MCF 10A (cell line): ENCODE measurements at regions of chr4 and their contacts with region 1.

Region 1: DNA sequence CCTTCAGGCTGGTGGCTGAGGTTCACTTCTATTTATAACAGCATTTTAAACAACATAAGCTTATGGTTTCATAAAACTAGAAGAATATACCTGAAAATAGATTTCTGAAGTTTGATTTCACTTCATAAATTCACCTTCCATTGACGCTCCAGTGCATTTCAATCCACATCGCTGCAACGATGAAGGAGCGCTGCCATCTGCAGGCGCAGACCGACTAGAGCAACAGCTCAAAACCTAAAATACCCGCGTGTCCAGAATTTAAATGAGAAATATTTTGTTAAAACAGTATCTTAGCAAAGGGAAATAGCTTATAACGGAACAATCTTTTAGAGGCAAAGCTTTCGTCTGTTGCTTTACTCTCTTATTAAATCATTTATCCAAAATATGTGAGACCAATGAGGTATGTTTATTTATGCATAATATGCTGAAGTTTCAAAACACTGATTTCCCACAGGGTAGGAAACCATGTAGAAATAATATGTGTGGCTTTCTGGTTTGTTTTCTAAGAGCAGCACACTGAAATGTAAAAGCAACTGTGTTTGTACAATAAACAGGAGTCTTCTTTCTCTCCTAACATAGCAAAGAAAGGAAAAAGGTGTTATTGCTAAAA is 816.4 kb upstream of the FRG1 start:
- DNase-seq: peak; percentile 47
- H3K4me3 Mint-ChIP-seq: no peak overlapping the region
- H3K27ac Mint-ChIP-seq: no peak overlapping the region
- H3K4me1 Mint-ChIP-seq: no peaks in the 10 kb centered on the region
- H3K27me3 Mint-ChIP-seq: no peaks in the 10 kb centered on the region
- CTCF ChIP-seq: peak; percentile 71

Region 2: DNA sequence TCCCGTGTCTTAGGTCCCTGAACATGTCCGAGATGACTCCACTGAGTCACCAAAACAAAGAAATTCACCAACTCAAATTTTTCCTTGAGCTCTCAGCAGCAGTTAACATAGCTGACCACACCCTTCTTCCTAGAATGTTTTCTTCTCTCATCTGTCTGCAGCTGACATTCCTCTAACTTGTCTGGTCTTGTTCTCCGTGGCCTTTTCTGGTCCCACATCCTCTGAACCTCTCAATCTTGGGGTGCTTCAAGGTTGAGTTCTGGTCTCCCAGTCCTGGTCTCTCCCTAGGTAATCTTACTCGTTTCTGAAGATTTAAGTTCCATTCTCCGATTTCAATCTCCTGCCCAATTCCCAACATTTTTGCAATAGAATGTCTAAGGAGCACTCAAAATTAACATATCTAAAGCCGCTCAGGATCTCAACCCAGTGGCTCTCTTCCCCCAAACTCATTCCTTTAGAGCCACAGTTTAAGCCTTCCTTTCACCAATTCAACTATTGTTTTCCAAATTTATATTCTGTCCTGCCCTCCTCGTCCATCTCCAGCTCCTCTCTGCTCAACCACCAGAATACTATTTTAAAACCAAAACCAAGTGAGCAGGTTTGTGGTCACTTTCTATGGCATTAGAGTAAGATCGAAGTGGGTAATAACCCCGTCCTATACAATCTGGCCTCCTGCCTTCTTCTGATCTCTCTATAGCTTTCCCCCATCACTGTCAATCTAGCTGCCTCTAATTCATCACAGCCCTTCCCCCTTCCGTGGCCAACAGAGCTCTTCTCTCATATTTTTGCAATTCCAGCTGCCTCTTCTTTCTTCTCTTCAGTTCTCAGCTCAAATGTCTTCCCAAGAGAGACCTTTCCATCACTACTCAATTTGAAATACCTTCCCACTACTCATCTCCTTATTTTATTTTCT is 1016.1 kb before region 1 on chr4:
- CTCF ChIA-PET with region 1: no interaction called
- POLR2A ChIA-PET with region 1: no interaction called
- intact Hi-C with region 1: loop called (anchors 10 kb)
- DNase-seq: peak; percentile 57
- H3K4me3 Mint-ChIP-seq: peak overlapping the region; percentile 57
- H3K27ac Mint-ChIP-seq: peak overlapping the region; percentile 86
- H3K4me1 Mint-ChIP-seq: peaks cover 41% of the 10 kb centered on the region
- H3K27me3 Mint-ChIP-seq: no peaks in the 10 kb centered on the region
- CTCF ChIP-seq: no peak

Region 3: DNA sequence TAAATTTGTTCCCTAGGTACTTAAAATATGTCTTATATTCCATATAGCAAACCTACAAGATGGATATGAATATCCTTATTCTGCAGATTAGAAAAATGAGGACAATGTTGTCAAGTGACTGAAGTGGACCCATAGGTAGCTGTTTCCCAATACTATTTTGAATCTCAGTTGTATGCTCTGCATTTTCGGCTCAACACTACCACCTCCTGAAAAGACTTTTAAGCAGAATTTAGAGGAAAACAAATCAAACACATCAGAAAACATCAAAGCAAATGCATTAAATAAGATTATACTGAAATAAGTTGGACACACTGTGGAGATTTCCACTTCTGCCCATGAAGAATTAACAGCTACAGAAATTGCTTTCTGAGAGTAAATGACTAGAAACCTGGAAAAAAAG is 496.4 kb before region 1 on chr4:
- CTCF ChIA-PET with region 1: no interaction called
- POLR2A ChIA-PET with region 1: no interaction called
- intact Hi-C with region 1: loop called (anchors 10 kb)
- DNase-seq: no peak
- H3K4me3 Mint-ChIP-seq: no peak overlapping the region
- H3K27ac Mint-ChIP-seq: no peak overlapping the region
- H3K4me1 Mint-ChIP-seq: no peaks in the 10 kb centered on the region
- H3K27me3 Mint-ChIP-seq: no peaks in the 10 kb centered on the region
- CTCF ChIP-seq: no peak

Region 4: GRCh38 chr4:188781655-188782054 is 342.6 kb before region 1 on chr4:
- CTCF ChIA-PET with region 1: interaction called, 3 read pairs
- POLR2A ChIA-PET with region 1: no interaction called
- intact Hi-C with region 1: loop called (anchors 10 kb)
- DNase-seq: peak; percentile 51
- H3K4me3 Mint-ChIP-seq: no peak overlapping the region
- H3K27ac Mint-ChIP-seq: no peak overlapping the region
- H3K4me1 Mint-ChIP-seq: no peaks in the 10 kb centered on the region
- H3K27me3 Mint-ChIP-seq: no peaks in the 10 kb centered on the region
- CTCF ChIP-seq: peak; percentile 24

Region 5: GRCh38 chr4:189069772-189070171 is 54.5 kb before region 1 on chr4:
- CTCF ChIA-PET with region 1: no interaction called
- POLR2A ChIA-PET with region 1: no interaction called
- intact Hi-C with region 1: no loop called
- DNase-seq: no peak
- H3K4me3 Mint-ChIP-seq: no peak overlapping the region
- H3K27ac Mint-ChIP-seq: no peak overlapping the region
- H3K4me1 Mint-ChIP-seq: no peaks in the 10 kb centered on the region
- H3K27me3 Mint-ChIP-seq: no peaks in the 10 kb centered on the region
- CTCF ChIP-seq: no peak

Region 6: DNA sequence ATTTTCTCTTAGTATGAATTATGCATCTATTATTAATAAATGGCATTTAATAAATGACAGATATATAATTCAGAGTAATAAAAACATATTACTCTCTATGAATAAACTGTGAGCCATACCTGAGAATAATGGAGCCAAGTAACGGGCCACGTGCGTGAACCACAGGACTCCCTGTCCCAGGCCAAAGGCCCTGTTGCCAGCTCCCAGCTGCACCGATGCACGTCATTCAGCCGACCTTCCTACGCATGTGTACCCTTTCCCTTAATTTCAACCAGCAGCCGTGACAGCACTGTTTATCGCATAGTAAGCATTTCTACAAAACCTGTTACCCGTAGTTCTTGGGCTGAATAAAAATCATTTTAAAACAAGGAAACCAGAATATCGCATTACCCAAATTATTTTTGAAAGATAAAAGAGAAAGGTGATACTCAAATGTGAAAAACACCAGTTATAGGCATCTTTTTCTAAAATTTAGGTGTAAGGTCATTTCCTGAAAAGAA is 10.8 kb before region 1 on chr4:
- CTCF ChIA-PET with region 1: interaction called, 12 read pairs
- POLR2A ChIA-PET with region 1: no interaction called
- intact Hi-C with region 1: no loop called
- DNase-seq: no peak
- H3K4me3 Mint-ChIP-seq: no peak overlapping the region
- H3K27ac Mint-ChIP-seq: no peak overlapping the region
- H3K4me1 Mint-ChIP-seq: no peaks in the 10 kb centered on the region
- H3K27me3 Mint-ChIP-seq: no peaks in the 10 kb centered on the region
- CTCF ChIP-seq: no peak